ENCODE measurements at regions of chr9 and their contacts with region 1.

Region 1: DNA sequence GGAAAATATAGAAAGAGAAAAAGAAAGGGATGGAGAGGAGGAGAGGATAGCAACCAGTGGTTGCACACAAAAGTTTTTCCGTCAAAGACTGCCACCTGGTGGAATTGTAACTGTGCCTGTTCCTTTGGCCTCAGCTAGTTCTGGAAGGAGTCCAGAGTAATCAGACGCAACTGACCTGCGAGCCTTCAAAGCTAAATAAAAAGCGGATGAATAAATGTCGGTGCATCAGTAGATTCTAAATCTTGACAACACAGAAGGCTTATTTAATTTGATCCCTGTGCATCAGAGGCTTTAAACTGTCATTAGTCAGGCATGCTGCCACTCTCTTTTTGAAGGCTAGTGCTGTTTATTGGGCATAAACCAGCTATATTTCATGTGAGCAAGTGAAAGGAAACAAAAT is 132.9 kb upstream of the ACO1 start:
- DNase-seq: peak; percentile 20
- ATAC-seq: no peak
- H3K4me3 ChIP-seq: no peak overlapping the region
- H3K27ac ChIP-seq: no peak overlapping the region
- H3K4me1 ChIP-seq: no peaks in the 10 kb centered on the region
- H3K27me3 ChIP-seq: no peaks in the 10 kb centered on the region
- CTCF ChIP-seq: peak; percentile 51
- POLR2A ChIP-seq: no peak
- RAD21 ChIP-seq: peak; percentile 43; the same call in 1 of the 2 replicates

Region 2: GRCh38 chr9:32161720-32162119 is 89.8 kb before region 1 on chr9:
- CTCF ChIA-PET with region 1: no interaction called
- POLR2A ChIA-PET with region 1: no interaction called
- dilution Hi-C with region 1: no loop called
- in situ Hi-C with region 1: loop called (anchors 25 kb)
- intact Hi-C with region 1: no loop called
- DNase-seq: no peak
- ATAC-seq: no peak
- H3K4me3 ChIP-seq: no peak overlapping the region
- H3K27ac ChIP-seq: no peak overlapping the region
- H3K4me1 ChIP-seq: no peaks in the 10 kb centered on the region
- H3K27me3 ChIP-seq: no peaks in the 10 kb centered on the region
- CTCF ChIP-seq: no peak
- POLR2A ChIP-seq: no peak
- RAD21 ChIP-seq: no peak

Measured in IMR-90 (cell line).